Heart right ventricle (tissue), 16 donors: ENCODE measurements at regions of chr2 and their contacts with region 1.

Region 1: DNA sequence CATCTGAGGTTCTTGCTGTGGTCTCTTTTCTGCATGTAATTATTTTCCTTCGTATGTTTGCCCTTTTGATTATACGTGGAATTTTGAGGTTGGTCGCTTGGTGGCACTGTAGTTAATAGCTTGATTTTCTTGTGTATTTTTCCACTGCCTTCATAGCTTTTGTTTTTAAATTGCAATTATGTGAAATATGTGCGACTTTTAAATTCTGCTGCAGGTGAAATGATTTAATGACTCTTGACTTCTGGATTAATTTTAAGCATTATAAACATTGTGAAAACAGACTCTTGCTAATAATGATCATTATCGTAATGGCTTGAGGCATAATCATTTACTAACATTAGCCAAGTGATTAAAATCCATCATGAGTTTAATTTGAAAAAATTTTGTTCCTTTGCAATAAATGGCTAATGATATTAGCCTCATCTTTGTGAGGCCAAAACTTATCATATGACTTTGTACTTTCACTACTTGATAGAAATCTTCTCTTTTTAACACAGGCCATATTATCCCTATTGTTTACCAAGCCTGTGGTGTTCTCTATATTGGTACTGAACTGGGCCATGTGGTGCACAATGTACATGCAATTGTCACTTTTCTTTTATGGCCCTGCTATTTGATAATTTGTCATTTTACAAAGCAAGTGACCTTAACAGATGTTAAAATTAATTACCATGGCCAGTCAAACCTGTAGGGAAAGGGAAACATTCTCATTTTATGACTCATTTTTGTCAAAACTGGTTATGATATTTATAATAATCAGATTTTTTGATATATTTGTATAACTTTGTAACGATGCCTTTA is 62.8 kb upstream of the NEUROD1 start:
- DNase-seq: peak in 1 of 2 donors; percentile 51
- ATAC-seq: no peak
- H3K4me3 ChIP-seq: no peak overlapping the region
- H3K27ac ChIP-seq: no peak overlapping the region
- H3K4me1 ChIP-seq: peaks cover 0 to 12% (median 0%) of the 10 kb centered on the region in 9 donors
- H3K27me3 ChIP-seq: no peaks in the 10 kb centered on the region
- CTCF ChIP-seq: peak; percentile 39 to 84 (median 70)

Region 2: GRCh38 chr2:181586569-181587081 is 156.5 kb before region 1 on chr2:
- intact Hi-C with region 1: no loop called
- DNase-seq: no peak
- ATAC-seq: no peak
- H3K4me3 ChIP-seq: no peak overlapping the region
- H3K27ac ChIP-seq: no peak overlapping the region
- H3K4me1 ChIP-seq: no peaks in the 10 kb centered on the region
- H3K27me3 ChIP-seq: peaks cover 0 to 35% (median 13%) of the 10 kb centered on the region in 7 donors
- CTCF ChIP-seq: no peak

Region 3: GRCh38 chr2:181891258-181891965 is 148.3 kb after region 1 on chr2 and contains the start of gene ITPRID2:
- intact Hi-C with region 1: loop called in 1 of 10 experiments (anchors 5 kb)
- DNase-seq: peak; percentile 89 to 90
- ATAC-seq: peak; percentile 93 to 98 (median 96)
- H3K4me3 ChIP-seq: peak within 1 kb of the TSS; percentile 51 to 92 (median 88)
- H3K27ac ChIP-seq: peak within 1 kb of the TSS; percentile 80 to 99 (median 98)
- H3K4me1 ChIP-seq: peaks cover 0 to 53% (median 44%) of the 10 kb centered on the region in 9 donors
- H3K27me3 ChIP-seq: no peaks in the 10 kb centered on the region
- CTCF ChIP-seq: peak in 4 of 9 donors; percentile 7 to 40 (median 38)
- total RNA-seq, gene ITPRID2: 49.5 to 86.6 (median 67.9) TPM

Region 4: GRCh38 chr2:181953881-181954537 is 210.9 kb after region 1 on chr2:
- intact Hi-C with region 1: loop called (anchors 1 to 10 kb)
- DNase-seq: peak; percentile 15 to 57
- ATAC-seq: peak in 6 of 8 donors; percentile 47 to 63 (median 54)
- H3K4me3 ChIP-seq: peak overlapping the region in 4 of 10 donors; percentile 3 to 28 (median 22)
- H3K27ac ChIP-seq: no peak overlapping the region
- H3K4me1 ChIP-seq: peaks cover 0 to 11% (median 4%) of the 10 kb centered on the region in 9 donors
- H3K27me3 ChIP-seq: no peaks in the 10 kb centered on the region
- CTCF ChIP-seq: peak in 8 of 9 donors; percentile 38 to 69 (median 60)

Region 5: GRCh38 chr2:182186132-182186735 is 443.1 kb after region 1 on chr2:
- intact Hi-C with region 1: loop called in 1 of 10 experiments (anchors 5 kb)
- DNase-seq: no peak
- ATAC-seq: peak; percentile 22 to 72 (median 51)
- H3K4me3 ChIP-seq: no peak overlapping the region
- H3K27ac ChIP-seq: peak overlapping the region in 3 of 10 donors; percentile 3 to 45 (median 27)
- H3K4me1 ChIP-seq: peaks cover 0 to 10% (median 5%) of the 10 kb centered on the region in 9 donors
- H3K27me3 ChIP-seq: no peaks in the 10 kb centered on the region
- CTCF ChIP-seq: peak; percentile 68 to 90 (median 81)

Region 6: DNA sequence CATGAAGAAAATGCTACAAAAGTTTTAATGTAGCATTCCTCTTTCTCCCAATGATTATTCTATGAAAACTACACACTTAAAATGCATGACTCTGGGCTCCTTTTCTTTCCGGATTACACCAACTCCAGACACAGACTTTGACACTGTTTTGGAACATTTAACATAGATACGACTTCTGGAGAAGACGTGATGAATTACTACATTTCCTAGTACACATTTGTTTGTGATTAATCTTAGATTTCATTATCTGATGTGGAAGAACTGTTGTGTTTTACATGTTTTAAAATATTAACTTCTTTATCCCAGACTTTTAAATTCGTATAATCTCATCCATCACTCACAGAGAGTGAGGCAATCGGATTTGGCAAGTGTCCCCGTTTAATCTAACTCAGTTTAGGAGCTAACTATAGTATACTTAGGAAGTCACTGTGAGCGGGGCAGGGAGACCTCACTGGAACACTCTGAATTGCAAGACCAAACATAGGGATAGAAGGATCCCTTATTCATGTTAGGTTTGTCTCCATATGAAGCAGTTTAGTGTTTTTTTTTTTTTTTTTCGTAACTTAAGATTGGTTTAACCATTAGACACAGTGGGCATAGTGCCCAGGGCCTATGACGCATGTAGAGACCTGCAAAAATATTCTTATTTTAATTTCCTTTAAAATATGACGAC is 617.0 kb after region 1 on chr2:
- intact Hi-C with region 1: no loop called
- DNase-seq: peak; percentile 11 to 49
- ATAC-seq: peak; percentile 46 to 85 (median 76)
- H3K4me3 ChIP-seq: peak overlapping the region in 2 of 10 donors; percentile 3 to 16
- H3K27ac ChIP-seq: peak overlapping the region in 8 of 10 donors; percentile 25 to 61 (median 44)
- H3K4me1 ChIP-seq: peaks cover 0 to 28% (median 7%) of the 10 kb centered on the region in 9 donors
- H3K27me3 ChIP-seq: no peaks in the 10 kb centered on the region
- CTCF ChIP-seq: no peak

Region 7: DNA sequence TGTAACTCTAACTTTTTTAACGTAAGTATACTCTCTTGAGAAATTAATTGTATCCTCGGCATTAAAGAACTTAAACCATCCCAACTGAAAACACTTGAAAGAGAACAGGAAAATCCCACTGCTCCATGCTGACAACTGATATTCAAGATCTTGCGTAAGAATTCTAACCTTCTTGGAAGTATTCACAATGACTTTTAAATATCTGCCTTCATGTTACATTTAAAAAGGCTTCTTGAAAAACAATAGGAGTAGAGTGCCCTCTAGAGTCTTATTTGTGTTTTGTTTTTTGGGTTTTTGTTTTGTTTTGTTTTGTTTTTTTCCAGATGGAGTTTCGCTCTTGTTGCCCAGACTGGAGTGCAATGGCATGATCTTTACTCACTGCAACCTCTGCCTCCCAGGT is 907.6 kb after region 1 on chr2:
- intact Hi-C with region 1: loop called in 5 of 10 experiments (anchors 5 to 10 kb)
- DNase-seq: no peak
- ATAC-seq: peak in 7 of 8 donors; percentile 39 to 79 (median 55)
- H3K4me3 ChIP-seq: no peak overlapping the region
- H3K27ac ChIP-seq: no peak overlapping the region
- H3K4me1 ChIP-seq: peaks cover 0 to 13% (median 0%) of the 10 kb centered on the region in 9 donors
- H3K27me3 ChIP-seq: no peaks in the 10 kb centered on the region
- CTCF ChIP-seq: peak; percentile 10 to 78 (median 61)